Activated CD4-positive, alpha-beta memory T cell treated with anti-CD3 and anti-CD28 coated beads for 36 hours (primary cell): ENCODE measurements at regions of chr5 and their contacts with region 1.

Region 1: DNA sequence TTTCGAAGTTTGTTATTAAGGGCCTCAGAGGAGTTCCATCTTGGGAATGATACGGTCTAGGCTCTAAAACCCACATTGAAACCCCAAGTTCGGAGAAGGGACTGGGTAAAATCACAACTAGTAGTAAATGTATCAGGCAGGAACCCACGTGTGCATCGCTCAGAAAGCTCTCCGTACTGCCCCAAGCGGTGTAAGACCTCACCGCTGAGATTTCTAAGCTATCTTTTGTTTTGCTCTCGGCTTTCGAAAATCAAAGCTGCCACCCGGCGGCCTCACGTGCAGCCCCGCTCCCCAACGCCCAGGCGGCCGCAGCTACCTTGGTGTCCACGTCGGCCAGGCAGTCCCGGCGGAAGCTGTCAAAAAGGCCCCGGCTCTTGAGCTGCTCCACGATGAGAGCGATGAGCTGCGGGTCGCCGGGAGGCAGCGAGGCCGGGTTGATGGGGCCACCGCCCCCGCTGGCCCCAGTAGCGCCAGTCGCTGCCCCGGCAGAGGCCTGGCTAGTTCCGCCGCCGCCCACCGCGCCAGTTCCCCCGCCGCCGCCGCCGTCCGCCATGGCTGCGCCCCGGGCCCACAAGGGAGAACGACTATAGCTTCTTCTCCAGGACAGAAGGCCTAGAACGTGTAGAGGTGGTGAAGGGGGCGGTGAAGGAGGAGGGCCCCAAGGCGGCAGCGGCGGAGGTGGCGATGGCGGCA is 420 bp downstream of the BOD1 start:
- DNase-seq: peak; percentile 80
- H3K4me3 Mint-ChIP-seq: peak overlapping the region; percentile 95
- H3K27ac Mint-ChIP-seq: peak overlapping the region; percentile 90
- H3K4me1 Mint-ChIP-seq: peaks cover 49% of the 10 kb centered on the region
- H3K27me3 Mint-ChIP-seq: no peaks in the 10 kb centered on the region

Region 2: GRCh38 chr5:173057062-173057924 is 558.7 kb before region 1 on chr5:
- CTCF ChIA-PET with region 1: no interaction called
- POLR2A ChIA-PET with region 1: no interaction called
- intact Hi-C with region 1: loop called (anchors 5 kb)
- DNase-seq: peak; percentile 100
- H3K4me3 Mint-ChIP-seq: peak overlapping the region; percentile 97
- H3K27ac Mint-ChIP-seq: peak overlapping the region; percentile 97
- H3K4me1 Mint-ChIP-seq: peaks cover 44% of the 10 kb centered on the region
- H3K27me3 Mint-ChIP-seq: no peaks in the 10 kb centered on the region

Region 3: DNA sequence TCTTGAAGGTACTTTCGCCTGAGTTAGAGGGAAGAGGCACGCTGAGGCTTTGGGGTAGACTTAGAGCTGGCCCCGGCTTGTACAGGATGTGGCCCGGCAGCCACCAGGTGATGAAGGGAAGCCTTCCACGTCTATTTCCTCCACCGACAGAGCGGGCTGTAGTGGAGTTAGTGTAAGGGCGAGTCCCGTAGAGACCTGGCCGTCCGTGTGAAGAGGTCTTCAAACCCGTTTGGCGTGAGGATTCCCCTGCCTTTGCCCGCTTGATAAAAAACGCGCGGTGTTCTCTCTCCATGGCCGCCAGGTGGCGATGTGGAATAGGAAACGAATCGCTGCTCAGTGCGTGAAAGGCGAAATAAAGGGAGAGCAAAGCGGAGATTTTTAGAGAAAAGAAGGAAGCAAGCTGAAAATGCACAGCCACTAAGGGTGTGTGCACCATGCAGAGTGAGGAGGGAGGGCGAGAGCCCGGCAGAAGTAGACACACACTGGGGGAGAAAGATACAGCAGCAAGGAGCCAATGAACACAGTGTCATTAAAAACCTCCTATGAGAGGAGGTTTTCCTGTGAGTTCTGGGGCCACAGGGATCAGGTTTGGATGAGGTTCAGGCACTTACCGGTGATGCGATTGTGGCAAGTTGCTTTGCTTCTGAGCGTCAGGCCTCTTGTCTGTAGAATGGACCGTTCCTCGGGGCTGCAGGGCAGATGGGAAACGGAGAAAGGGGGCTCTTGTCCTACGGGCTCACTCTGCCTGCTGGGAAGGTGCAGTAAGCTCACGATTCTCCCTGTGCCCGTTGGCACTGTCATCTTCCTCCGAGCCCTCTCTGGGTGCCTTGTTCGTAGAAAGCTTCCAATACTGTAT is 322.0 kb before region 1 on chr5:
- CTCF ChIA-PET with region 1: no interaction called
- POLR2A ChIA-PET with region 1: no interaction called
- intact Hi-C with region 1: loop called (anchors 1 kb)
- DNase-seq: peak; percentile 80
- H3K4me3 Mint-ChIP-seq: no peak overlapping the region
- H3K27ac Mint-ChIP-seq: no peak overlapping the region
- H3K4me1 Mint-ChIP-seq: peaks cover 15% of the 10 kb centered on the region
- H3K27me3 Mint-ChIP-seq: peaks cover 40% of the 10 kb centered on the region

Region 4: GRCh38 chr5:173789031-173789920 is 173.2 kb after region 1 on chr5:
- CTCF ChIA-PET with region 1: no interaction called
- POLR2A ChIA-PET with region 1: no interaction called
- intact Hi-C with region 1: loop called (anchors 2 kb)
- DNase-seq: peak; percentile 70
- H3K4me3 Mint-ChIP-seq: no peak overlapping the region
- H3K27ac Mint-ChIP-seq: no peak overlapping the region
- H3K4me1 Mint-ChIP-seq: peaks cover 19% of the 10 kb centered on the region
- H3K27me3 Mint-ChIP-seq: no peaks in the 10 kb centered on the region

Region 5: DNA sequence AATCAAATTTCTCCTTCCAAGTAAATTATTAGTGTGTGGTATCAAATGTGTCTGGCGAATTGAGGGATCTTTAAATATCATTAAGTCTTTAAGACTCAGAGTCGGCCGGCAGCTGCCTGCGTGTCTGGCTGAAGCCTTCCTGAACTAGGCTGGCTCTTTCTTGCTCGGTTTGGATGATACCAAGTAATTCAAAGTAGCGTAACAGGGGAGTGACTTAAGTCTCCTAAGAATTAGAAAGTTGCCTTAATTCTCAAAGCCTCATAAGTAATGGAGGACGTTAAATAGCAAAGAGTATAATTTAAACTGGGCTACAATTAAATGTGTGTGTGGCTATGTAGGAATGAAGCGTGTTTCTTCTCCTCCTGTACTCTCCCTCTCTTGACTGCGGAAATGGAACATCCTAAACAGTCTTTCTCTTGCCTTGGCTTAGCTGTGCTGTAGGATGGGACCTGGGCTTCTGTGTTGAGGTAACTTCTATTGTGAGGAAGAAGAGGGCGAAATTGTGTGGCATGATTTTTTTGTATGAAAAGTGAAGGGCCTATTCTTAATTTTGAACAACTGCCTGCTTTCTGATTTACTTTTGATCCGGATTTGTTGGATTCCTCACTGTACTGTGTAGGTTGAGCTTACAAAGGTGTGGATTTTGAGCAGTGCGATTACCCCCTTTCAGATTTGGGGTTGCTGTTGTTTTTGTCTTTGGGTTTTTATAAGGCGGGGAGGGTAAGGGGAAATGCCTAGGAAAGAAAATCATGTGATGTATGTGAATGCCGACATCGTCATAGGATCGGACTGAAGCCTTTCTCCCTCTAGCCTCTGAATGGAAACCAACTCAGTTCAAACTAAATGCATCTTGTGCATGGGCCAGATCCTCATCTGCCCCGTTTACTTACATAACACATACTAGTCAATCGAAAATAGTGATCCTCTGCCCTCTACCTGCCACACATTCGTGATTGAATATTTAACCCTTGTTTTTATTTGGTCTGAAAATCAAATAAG is 302.1 kb after region 1 on chr5:
- CTCF ChIA-PET with region 1: interaction called, 29 read pairs
- POLR2A ChIA-PET with region 1: interaction called, 6 read pairs
- intact Hi-C with region 1: loop called (anchors 1 kb)
- DNase-seq: peak; percentile 65
- H3K4me3 Mint-ChIP-seq: no peak overlapping the region
- H3K27ac Mint-ChIP-seq: no peak overlapping the region
- H3K4me1 Mint-ChIP-seq: peaks cover 6% of the 10 kb centered on the region
- H3K27me3 Mint-ChIP-seq: no peaks in the 10 kb centered on the region

Region 6: GRCh38 chr5:173972925-173973615 is 357.0 kb after region 1 on chr5:
- CTCF ChIA-PET with region 1: interaction called, 115 read pairs
- POLR2A ChIA-PET with region 1: interaction called, 4 read pairs
- intact Hi-C with region 1: loop called (anchors 1 kb)
- DNase-seq: peak; percentile 85
- H3K4me3 Mint-ChIP-seq: peak overlapping the region; percentile 68
- H3K27ac Mint-ChIP-seq: no peak overlapping the region
- H3K4me1 Mint-ChIP-seq: peaks cover 9% of the 10 kb centered on the region
- H3K27me3 Mint-ChIP-seq: peaks cover 4% of the 10 kb centered on the region

Region 7: GRCh38 chr5:175517818-175518450 is 1901.9 kb after region 1 on chr5:
- CTCF ChIA-PET with region 1: no interaction called
- POLR2A ChIA-PET with region 1: no interaction called
- intact Hi-C with region 1: loop called (anchors 5 kb)
- DNase-seq: peak; percentile 95
- H3K4me3 Mint-ChIP-seq: peak overlapping the region; percentile 53
- H3K27ac Mint-ChIP-seq: peak overlapping the region; percentile 100
- H3K4me1 Mint-ChIP-seq: peaks cover 92% of the 10 kb centered on the region
- H3K27me3 Mint-ChIP-seq: no peaks in the 10 kb centered on the region